SK-N-SH (cell line): ENCODE measurements at regions of chr14 and their contacts with region 1.

Region 1: GRCh38 chr14:90235179-90235976 is 21.0 kb upstream of the PSMC1 start:
- DNase-seq: peak; percentile 80
- H3K4me3 ChIP-seq: no peak overlapping the region; a peak in 1 of 4 replicates
- H3K27ac ChIP-seq: no peak overlapping the region
- H3K4me1 ChIP-seq: peaks cover 0 to 4% of the 10 kb centered on the region in 2 experiments; a peak in 1 of 4 replicates
- H3K27me3 ChIP-seq: no peaks in the 10 kb centered on the region
- CTCF ChIP-seq: peak; percentile 82
- EP300 ChIP-seq: no peak
- RAD21 ChIP-seq: peak; percentile 93

Region 2: GRCh38 chr14:89954070-89955028 is 281.0 kb before region 1 on chr14 and contains the start of gene EFCAB11:
- CTCF ChIA-PET with region 1: interaction called, 17 read pairs
- POLR2A ChIA-PET with region 1: no interaction called
- DNase-seq: peak; percentile 92
- H3K4me3 ChIP-seq: peak within 1 kb of the TSS; percentile 76 to 89
- H3K27ac ChIP-seq: peak within 1 kb of the TSS; percentile 85 to 94
- H3K4me1 ChIP-seq: peaks cover 10 to 11% of the 10 kb centered on the region in 2 experiments; a peak in 3 of 4 replicates
- H3K27me3 ChIP-seq: no peaks in the 10 kb centered on the region
- CTCF ChIP-seq: peak; percentile 47
- EP300 ChIP-seq: no peak
- RAD21 ChIP-seq: no peak
- polyA plus RNA-seq, gene EFCAB11: 2.9 and 3.9 TPM in 2 replicates

Region 3: DNA sequence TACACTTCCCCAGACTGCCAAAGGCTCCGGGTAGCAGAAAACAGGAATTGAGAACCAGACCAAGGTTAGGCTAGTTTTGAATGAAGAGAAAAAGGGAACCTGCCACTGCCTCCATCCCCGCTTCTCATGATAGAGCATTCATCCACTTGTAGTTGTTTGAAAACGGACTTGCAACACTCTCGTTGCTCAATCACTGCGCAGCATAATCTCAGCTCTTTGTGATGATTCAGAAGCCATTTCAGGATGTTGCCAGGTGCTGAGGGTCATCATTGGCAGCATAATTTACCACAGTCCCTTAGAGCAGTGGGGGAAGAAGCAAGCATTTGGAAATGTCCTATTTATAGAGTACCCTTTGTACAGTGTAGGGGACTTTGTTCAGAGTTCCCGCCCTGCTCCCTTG is 147.9 kb before region 1 on chr14:
- CTCF ChIA-PET with region 1: no interaction called
- POLR2A ChIA-PET with region 1: no interaction called
- DNase-seq: no peak
- H3K4me3 ChIP-seq: no peak overlapping the region
- H3K27ac ChIP-seq: no peak overlapping the region
- H3K4me1 ChIP-seq: peaks cover 0 to 3% of the 10 kb centered on the region in 2 experiments; a peak in 1 of 4 replicates
- H3K27me3 ChIP-seq: no peaks in the 10 kb centered on the region; the same call in 1 of the 2 replicates
- CTCF ChIP-seq: no peak
- EP300 ChIP-seq: no peak
- RAD21 ChIP-seq: no peak

Region 4: DNA sequence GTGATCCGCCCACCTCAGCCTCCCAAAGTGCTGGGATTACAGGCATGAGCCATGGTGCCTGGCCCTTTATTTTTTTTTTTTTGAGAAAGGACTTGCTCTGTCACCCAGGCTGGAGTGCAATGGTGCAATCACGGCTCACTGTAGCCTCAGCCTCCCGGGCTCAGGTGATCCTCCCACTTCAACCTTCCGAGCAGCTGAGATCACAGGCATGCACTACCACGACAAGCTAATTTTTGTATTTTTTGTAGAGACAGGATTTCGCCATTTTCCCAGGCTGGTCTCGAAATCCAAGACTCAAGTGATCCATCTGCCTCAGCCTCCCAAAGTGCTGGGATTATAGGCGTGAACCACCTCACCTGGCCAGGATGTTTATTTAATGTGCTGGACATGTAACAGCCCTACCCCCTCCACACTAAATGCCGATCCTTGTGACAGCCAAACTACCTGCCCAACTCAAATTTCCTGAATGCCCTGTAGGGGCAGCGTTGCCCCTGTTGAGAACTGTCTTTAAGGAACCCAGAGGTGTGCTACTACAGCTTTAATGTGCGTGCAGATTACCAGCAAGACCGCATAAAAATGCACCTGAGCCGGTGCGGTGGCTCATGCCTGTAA is 125.6 kb before region 1 on chr14:
- CTCF ChIA-PET with region 1: interaction called, 29 read pairs
- POLR2A ChIA-PET with region 1: no interaction called
- DNase-seq: peak; percentile 42
- H3K4me3 ChIP-seq: no peak overlapping the region
- H3K27ac ChIP-seq: no peak overlapping the region
- H3K4me1 ChIP-seq: no peaks in the 10 kb centered on the region
- H3K27me3 ChIP-seq: no peaks in the 10 kb centered on the region; the same call in 1 of the 2 replicates
- CTCF ChIP-seq: peak; percentile 49
- EP300 ChIP-seq: no peak
- RAD21 ChIP-seq: peak; percentile 57

Region 5: GRCh38 chr14:90213099-90213748 is 22.2 kb before region 1 on chr14:
- CTCF ChIA-PET with region 1: interaction called, 11 read pairs
- POLR2A ChIA-PET with region 1: no interaction called
- DNase-seq: no peak
- H3K4me3 ChIP-seq: no peak overlapping the region
- H3K27ac ChIP-seq: no peak overlapping the region
- H3K4me1 ChIP-seq: no peaks in the 10 kb centered on the region
- H3K27me3 ChIP-seq: no peaks in the 10 kb centered on the region
- CTCF ChIP-seq: no peak
- EP300 ChIP-seq: no peak
- RAD21 ChIP-seq: no peak

Region 6: DNA sequence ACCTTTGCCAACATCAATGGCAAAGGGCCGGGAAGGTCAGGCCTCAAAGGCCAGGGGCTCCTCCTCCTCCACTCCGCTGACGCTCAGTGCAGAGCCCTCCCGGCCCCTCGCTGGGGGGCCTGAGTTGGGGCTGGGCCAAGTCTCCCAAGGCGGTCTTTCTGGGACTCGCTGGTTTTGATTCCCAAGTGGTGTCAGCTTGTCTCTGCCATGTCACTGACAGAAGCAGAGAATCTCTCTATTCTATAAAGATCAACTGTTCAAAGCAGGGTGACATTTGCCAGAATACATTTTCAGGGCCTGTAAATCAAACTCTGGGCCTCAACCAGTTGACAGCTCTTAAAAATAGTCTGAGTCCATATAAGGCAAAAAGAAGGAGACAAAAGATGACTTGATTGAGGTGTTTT is 1106.4 kb after region 1 on chr14:
- CTCF ChIA-PET with region 1: no interaction called
- POLR2A ChIA-PET with region 1: no interaction called
- DNase-seq: no peak
- H3K4me3 ChIP-seq: no peak overlapping the region
- H3K27ac ChIP-seq: no peak overlapping the region
- H3K4me1 ChIP-seq: peaks cover 0 to 6% of the 10 kb centered on the region in 2 experiments; a peak in 1 of 4 replicates
- H3K27me3 ChIP-seq: no peaks in the 10 kb centered on the region
- CTCF ChIP-seq: no peak
- EP300 ChIP-seq: no peak
- RAD21 ChIP-seq: no peak